ENCODE measurements at regions of chr11 and their contacts with region 1.

Region 1: DNA sequence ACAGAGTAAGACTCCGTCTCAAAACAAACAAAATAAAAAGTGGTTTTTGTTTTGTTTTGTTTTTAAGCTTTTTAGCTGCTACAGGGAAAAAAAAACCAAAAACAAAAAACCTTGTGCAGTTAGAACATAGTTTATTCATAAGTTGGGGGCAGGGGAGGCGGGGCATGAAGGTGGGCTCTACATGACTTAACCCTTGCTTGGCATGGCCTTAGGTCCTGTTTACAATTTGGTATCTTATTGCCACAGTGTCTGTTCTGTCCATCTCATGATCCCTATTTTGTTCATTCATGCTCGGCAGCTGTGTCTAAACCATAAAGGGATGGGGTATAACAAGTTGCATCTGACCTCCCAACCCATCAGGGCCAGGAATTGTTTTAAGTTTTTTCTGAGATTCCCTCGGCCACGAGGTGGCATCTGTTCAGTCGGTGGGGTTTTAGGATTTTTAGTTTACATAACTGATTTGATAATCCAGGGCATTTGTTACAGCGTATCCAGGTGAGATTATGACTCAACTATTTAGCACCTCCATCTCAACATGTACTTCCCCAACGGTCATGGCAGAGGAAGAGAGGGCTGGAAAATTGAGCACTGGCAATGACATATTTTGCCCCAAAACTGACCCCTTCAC is 6.9 kb downstream of the AP5B1 start:
- DNase-seq: no peak
- ATAC-seq: no peak
- H3K4me3 Mint-ChIP-seq: no peak overlapping the region
- H3K27ac Mint-ChIP-seq: no peak overlapping the region
- H3K4me1 Mint-ChIP-seq: peaks cover 30% of the 10 kb centered on the region
- H3K27me3 Mint-ChIP-seq: no peaks in the 10 kb centered on the region
- CTCF ChIP-seq: no peak

Region 2: GRCh38 chr11:65625628-65626342 is 148.1 kb before region 1 on chr11:
- CTCF ChIA-PET with region 1: interaction called, 10 read pairs
- POLR2A ChIA-PET with region 1: no interaction called
- intact Hi-C with region 1: no loop called
- DNase-seq: peak; percentile 68
- ATAC-seq: peak; percentile 93
- H3K4me3 Mint-ChIP-seq: no peak overlapping the region
- H3K27ac Mint-ChIP-seq: no peak overlapping the region
- H3K4me1 Mint-ChIP-seq: peaks cover 3% of the 10 kb centered on the region
- H3K27me3 Mint-ChIP-seq: no peaks in the 10 kb centered on the region
- CTCF ChIP-seq: peak; percentile 69

Region 3: DNA sequence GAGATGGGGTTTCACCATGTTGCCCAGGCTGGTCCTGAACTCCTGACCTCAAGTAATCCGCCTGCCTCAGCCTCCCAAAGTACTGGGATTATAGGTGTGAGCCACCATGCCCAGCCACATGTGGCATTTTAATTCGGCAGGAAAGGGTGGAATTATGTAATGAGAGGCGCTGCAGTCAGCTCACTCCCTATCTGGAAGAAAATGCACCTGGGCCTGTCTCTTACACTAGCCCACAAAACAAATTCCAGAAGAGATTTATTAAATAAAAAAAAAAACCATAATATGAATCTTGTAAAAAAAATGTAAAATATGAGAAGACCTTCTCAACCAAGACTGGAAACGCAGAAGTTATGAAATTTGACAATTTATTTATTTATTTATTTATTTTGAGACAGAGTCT is 70.1 kb before region 1 on chr11:
- CTCF ChIA-PET with region 1: interaction called, 18 read pairs
- POLR2A ChIA-PET with region 1: no interaction called
- intact Hi-C with region 1: no loop called
- DNase-seq: no peak
- ATAC-seq: no peak
- H3K4me3 Mint-ChIP-seq: no peak overlapping the region
- H3K27ac Mint-ChIP-seq: no peak overlapping the region
- H3K4me1 Mint-ChIP-seq: peaks cover 7% of the 10 kb centered on the region
- H3K27me3 Mint-ChIP-seq: peaks cover 1% of the 10 kb centered on the region
- CTCF ChIP-seq: no peak

Region 4: GRCh38 chr11:65711785-65712632 is 61.9 kb before region 1 on chr11 and contains the start of gene KAT5:
- CTCF ChIA-PET with region 1: interaction called, 33 read pairs
- POLR2A ChIA-PET with region 1: interaction called, 13 read pairs
- intact Hi-C with region 1: loop called (anchors 5 kb)
- DNase-seq: peak; percentile 99
- ATAC-seq: peak; percentile 82
- H3K4me3 Mint-ChIP-seq: peak within 1 kb of the TSS; percentile 93
- H3K27ac Mint-ChIP-seq: peak within 1 kb of the TSS; percentile 98
- H3K4me1 Mint-ChIP-seq: peaks cover 20% of the 10 kb centered on the region
- H3K27me3 Mint-ChIP-seq: no peaks in the 10 kb centered on the region
- CTCF ChIP-seq: peak; percentile 93
- total RNA-seq, gene KAT5: 67.7 to 71.8 TPM

Region 5: GRCh38 chr11:65743928-65744698 is 29.8 kb before region 1 on chr11:
- CTCF ChIA-PET with region 1: interaction called, 10 read pairs
- POLR2A ChIA-PET with region 1: no interaction called
- intact Hi-C with region 1: no loop called
- DNase-seq: peak; percentile 39
- ATAC-seq: peak; percentile 56
- H3K4me3 Mint-ChIP-seq: no peak overlapping the region
- H3K27ac Mint-ChIP-seq: no peak overlapping the region
- H3K4me1 Mint-ChIP-seq: no peaks in the 10 kb centered on the region
- H3K27me3 Mint-ChIP-seq: peaks cover 12% of the 10 kb centered on the region
- CTCF ChIP-seq: no peak

Region 6: DNA sequence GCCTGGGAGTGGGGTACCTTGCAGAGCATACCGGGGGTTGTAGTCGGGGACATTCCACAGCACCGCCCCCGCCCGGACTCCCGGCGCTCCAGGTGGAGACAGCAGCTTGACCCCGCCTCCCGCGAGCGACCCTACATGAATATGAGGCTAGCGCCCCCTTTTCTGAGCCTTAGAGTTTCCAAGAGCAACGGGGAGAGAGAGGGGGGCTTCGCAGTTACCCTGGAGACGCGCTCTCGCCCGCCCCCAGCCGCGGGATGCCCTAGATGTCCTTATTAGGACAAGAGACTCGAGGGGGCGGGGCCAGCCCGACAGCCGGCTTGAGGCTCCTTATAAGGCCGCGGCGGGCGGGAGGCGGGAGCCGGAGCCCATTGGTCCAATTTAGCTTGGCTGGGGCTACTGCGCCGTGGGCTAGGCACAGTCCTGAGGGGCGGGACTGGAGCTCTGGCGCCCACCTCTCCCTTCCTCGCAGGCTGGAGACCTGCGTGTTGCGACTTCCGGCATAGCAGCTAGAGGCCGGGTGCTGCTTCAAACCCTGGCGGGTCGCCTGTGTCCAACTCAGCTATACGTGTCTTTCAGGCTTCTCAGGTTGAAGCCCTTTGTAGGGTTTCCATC is 85.4 kb after region 1 on chr11:
- CTCF ChIA-PET with region 1: no interaction called
- POLR2A ChIA-PET with region 1: no interaction called
- intact Hi-C with region 1: no loop called
- DNase-seq: peak; percentile 100
- ATAC-seq: peak; percentile 72
- H3K4me3 Mint-ChIP-seq: peak overlapping the region; percentile 90
- H3K27ac Mint-ChIP-seq: peak overlapping the region; percentile 99
- H3K4me1 Mint-ChIP-seq: peaks cover 37% of the 10 kb centered on the region
- H3K27me3 Mint-ChIP-seq: no peaks in the 10 kb centered on the region
- CTCF ChIP-seq: no peak

Region 7: GRCh38 chr11:65900125-65900898 is 126.4 kb after region 1 on chr11 and contains the start of gene FOSL1:
- CTCF ChIA-PET with region 1: no interaction called
- POLR2A ChIA-PET with region 1: no interaction called
- intact Hi-C with region 1: no loop called
- DNase-seq: peak; percentile 97
- ATAC-seq: peak; percentile 88
- H3K4me3 Mint-ChIP-seq: peak within 1 kb of the TSS; percentile 80
- H3K27ac Mint-ChIP-seq: peak within 1 kb of the TSS; percentile 86
- H3K4me1 Mint-ChIP-seq: peaks cover 32% of the 10 kb centered on the region
- H3K27me3 Mint-ChIP-seq: peaks cover 5% of the 10 kb centered on the region
- CTCF ChIP-seq: no peak
- total RNA-seq, gene FOSL1: 9.9 to 10.2 TPM

Measured in activated CD8-positive, alpha-beta T cell treated with anti-CD3 and anti-CD28 coated beads for 36 hours (primary cell).